ENCODE measurements at regions of chr7 and their contacts with region 1.

Region 1: GRCh38 chr7:152436111-152436930 is 518 bp upstream of the KMT2C start:
- DNase-seq: peak; percentile 94 to 97 (median 95)
- H3K4me3 ChIP-seq: peak overlapping the region; percentile 81
- H3K27ac ChIP-seq: peak overlapping the region; percentile 97 to 100
- H3K4me1 ChIP-seq: no peaks in the 10 kb centered on the region
- H3K27me3 ChIP-seq: no peaks in the 10 kb centered on the region
- CTCF ChIP-seq: peak in 1 of 3 donors; percentile 19
- EP300 ChIP-seq: no peak
- POLR2A ChIP-seq: peak; percentile 80

Region 2: DNA sequence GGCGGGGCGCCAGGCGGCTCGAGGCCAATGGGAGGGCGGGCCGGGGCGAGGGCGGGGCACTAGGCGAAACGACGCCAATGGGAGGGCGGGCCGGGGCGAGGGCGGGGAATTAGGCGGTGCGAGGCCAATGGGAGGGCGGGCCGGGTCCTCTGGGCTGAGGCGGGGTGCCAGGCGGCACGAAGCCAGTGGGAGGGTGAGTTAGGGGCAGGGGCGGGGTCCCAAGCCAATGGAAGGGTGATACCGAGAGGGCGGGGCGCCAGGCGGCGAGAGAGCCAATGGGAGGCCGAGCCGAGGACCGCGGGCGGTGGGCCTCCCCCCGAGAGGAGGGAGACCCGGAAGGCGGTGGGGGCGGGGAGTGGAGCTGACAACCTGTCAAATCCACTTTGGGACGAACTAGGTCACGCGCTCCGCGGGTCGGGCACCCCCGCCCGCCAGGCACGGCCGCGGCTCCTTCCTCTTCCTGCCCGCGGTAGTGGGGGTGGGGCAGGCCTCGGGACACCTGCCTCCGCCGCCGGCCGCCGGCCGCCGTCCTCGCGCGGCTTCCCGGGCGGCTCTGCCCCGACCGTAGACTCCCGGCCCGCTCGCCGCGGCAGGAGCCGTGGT is 27.5 kb after region 1 on chr7:
- intact Hi-C with region 1: loop called in 1 of 4 experiments (anchors 1 kb)
- DNase-seq: peak; percentile 100
- H3K4me3 ChIP-seq: peak overlapping the region; percentile 79
- H3K27ac ChIP-seq: peak overlapping the region; percentile 99
- H3K4me1 ChIP-seq: peaks cover 8% of the 10 kb centered on the region
- H3K27me3 ChIP-seq: no peaks in the 10 kb centered on the region
- CTCF ChIP-seq: peak in 1 of 3 donors; percentile 35
- EP300 ChIP-seq: peak; percentile 87
- POLR2A ChIP-seq: peak; percentile 91

Measured in ovary (tissue), 10 donors.